AG04449 (cell line): ENCODE measurements at regions of chr1 and their contacts with region 1.

Region 1: GRCh38 chr1:146036965-146037646 is 15.6 kb upstream of the HJV start:
- DNase-seq: peak; percentile 37
- H3K4me3 ChIP-seq: peak overlapping the region; percentile 72
- CTCF ChIP-seq: no peak

Region 2: GRCh38 chr1:145871994-145872924 is 164.8 kb before region 1 on chr1:
- CTCF ChIA-PET with region 1: no interaction called
- POLR2A ChIA-PET with region 1: no interaction called
- DNase-seq: no peak
- H3K4me3 ChIP-seq: peak overlapping the region; percentile 29
- CTCF ChIP-seq: no peak

Region 3: GRCh38 chr1:146012737-146013403 is 24.2 kb before region 1 on chr1:
- CTCF ChIA-PET with region 1: interaction called, 153 read pairs
- POLR2A ChIA-PET with region 1: no interaction called
- DNase-seq: no peak
- H3K4me3 ChIP-seq: no peak overlapping the region
- CTCF ChIP-seq: peak; percentile 53

Region 4: GRCh38 chr1:146019231-146020057 is 17.7 kb before region 1 on chr1:
- CTCF ChIA-PET with region 1: interaction called, 153 read pairs
- POLR2A ChIA-PET with region 1: no interaction called
- DNase-seq: no peak
- H3K4me3 ChIP-seq: no peak overlapping the region
- CTCF ChIP-seq: no peak

Region 5: GRCh38 chr1:146049436-146049835 is 12.3 kb after region 1 on chr1:
- CTCF ChIA-PET with region 1: interaction called, 13 read pairs
- POLR2A ChIA-PET with region 1: interaction called, 47 read pairs
- DNase-seq: no peak
- H3K4me3 ChIP-seq: no peak overlapping the region
- CTCF ChIP-seq: no peak